Sigmoid colon (tissue), 7 donors: ENCODE measurements at regions of chr16 and their contacts with region 1.

Region 1: GRCh38 chr16:74296432-74297144 is at the start of gene PSMD7:
- DNase-seq: peak; percentile 96
- H3K4me3 ChIP-seq: peak within 1 kb of the TSS; percentile 78 to 95 (median 91)
- H3K27ac ChIP-seq: peak within 1 kb of the TSS; percentile 89 to 95 (median 94)
- H3K4me1 ChIP-seq: peaks cover 0 to 35% (median 28%) of the 10 kb centered on the region in 4 donors
- H3K27me3 ChIP-seq: no peaks in the 10 kb centered on the region
- CTCF ChIP-seq: no peak
- EP300 ChIP-seq: peak in 1 of 4 donors; percentile 48
- POLR2A ChIP-seq: peak; percentile 78 to 89
- total RNA-seq, gene PSMD7: 62.9 to 160 (median 90.3) TPM

Region 2: GRCh38 chr16:74372953-74373846 is 76.6 kb after region 1 on chr16:
- intact Hi-C with region 1: loop called (anchors 5 kb)
- DNase-seq: no peak
- H3K4me3 ChIP-seq: no peak overlapping the region
- H3K27ac ChIP-seq: no peak overlapping the region
- H3K4me1 ChIP-seq: peaks cover 0 to 6% (median 0%) of the 10 kb centered on the region in 4 donors
- H3K27me3 ChIP-seq: no peaks in the 10 kb centered on the region
- CTCF ChIP-seq: no peak
- EP300 ChIP-seq: no peak
- POLR2A ChIP-seq: no peak